ENCODE measurements at regions of chr10 and their contacts with region 1.

Region 1: DNA sequence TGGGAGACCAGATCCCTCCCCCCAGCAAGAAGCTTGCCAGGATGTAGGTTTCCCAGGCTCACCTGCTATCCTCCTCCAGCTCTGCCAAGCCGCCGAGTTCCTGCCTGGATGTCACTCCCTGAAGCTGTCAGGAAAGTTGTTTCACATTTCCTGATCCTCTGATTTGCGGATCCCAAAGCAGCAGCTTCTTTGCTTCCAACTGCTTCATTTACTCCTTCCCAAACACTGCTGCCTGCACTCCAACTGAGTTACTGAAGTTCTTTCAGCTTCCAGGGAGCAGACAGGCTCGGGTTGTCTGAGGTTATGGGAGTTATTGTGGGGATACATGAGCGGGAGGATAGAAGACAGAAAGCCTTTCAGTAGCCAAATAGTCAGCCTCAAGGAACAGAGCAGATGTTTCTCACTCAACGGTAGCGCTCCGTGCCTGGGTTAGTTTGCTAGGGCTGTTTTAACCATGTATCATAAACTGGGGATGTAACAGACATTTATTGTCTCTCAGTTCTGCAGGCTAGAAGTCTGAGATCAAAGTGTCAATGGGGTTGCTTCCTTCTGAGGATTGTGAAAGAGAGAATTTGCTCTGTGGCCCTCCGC is 516.0 kb downstream of the REEP3 start:
- DNase-seq: no peak
- H3K4me3 ChIP-seq: peak overlapping the region in 2 of 3 donors; percentile 25 to 43
- H3K27ac ChIP-seq: no peak overlapping the region
- H3K4me1 ChIP-seq: peaks cover 0 to 11% of the 10 kb centered on the region in 2 donors
- H3K27me3 ChIP-seq: peaks cover 0 to 6% of the 10 kb centered on the region in 2 donors
- CTCF ChIP-seq: no peak
- POLR2A ChIP-seq: no peak

Region 2: GRCh38 chr10:64062793-64063192 is 25.6 kb after region 1 on chr10:
- intact Hi-C with region 1: loop called (anchors 1 kb)
- DNase-seq: no peak
- H3K4me3 ChIP-seq: no peak overlapping the region
- H3K27ac ChIP-seq: no peak overlapping the region
- H3K4me1 ChIP-seq: no peaks in the 10 kb centered on the region
- H3K27me3 ChIP-seq: no peaks in the 10 kb centered on the region
- CTCF ChIP-seq: no peak
- POLR2A ChIP-seq: no peak

Measured in breast epithelium (tissue), 4 donors.